ENCODE measurements at regions of chr11 and their contacts with region 1.

Region 1: GRCh38 chr11:47394322-47395222 is 13.8 kb upstream of the SLC39A13 start:
- DNase-seq: peak; percentile 72
- H3K4me3 Mint-ChIP-seq: peak overlapping the region; percentile 37
- H3K27ac Mint-ChIP-seq: peak overlapping the region; percentile 87
- H3K4me1 Mint-ChIP-seq: peaks cover 45% of the 10 kb centered on the region
- H3K27me3 Mint-ChIP-seq: no peaks in the 10 kb centered on the region

Region 2: DNA sequence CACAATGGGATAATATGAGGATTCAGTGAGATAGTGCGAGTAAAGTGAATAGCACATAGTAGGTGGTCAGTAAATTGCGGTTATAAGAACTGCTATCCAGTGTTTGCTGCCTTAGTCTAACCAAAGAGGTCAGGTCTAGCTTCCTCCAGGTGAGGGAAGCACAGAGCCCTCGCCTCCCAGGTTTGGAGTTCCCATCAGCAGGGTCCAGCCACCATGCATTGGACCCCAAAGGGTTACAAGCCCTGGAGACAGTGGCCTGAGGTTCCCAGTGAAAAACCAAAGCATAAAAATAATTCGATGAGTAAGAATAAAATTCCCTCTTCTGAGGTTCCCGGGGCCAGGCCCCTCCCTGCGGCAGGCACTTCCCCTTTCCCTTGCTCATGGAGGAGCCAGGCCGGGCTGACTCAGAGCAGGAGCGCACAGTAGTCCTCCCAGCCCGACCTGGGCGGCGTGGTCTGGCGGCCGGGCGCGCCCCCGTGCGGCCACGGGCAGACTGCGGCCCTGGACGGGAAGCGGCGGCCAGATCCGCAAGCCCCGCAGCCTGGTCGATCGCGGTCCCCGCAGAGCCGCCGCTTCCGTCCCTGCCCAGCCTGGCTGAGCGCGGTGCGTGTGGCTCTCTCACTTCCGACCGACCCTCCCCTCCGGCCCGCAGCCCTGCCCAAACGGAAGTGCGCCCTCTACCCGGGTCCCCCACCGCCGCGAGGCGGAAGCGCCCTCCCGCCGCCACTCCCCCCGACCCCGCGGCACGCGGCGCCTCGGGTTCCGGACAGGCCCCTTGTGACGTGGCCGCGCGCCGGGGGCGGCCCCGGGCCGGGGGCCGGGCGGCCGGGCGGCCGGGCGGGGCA is 13.4 kb after region 1 on chr11 and contains the start of gene SLC39A13:
- CTCF ChIA-PET with region 1: interaction called, 12 read pairs
- POLR2A ChIA-PET with region 1: interaction called, 23 read pairs
- DNase-seq: peak; percentile 94
- H3K4me3 Mint-ChIP-seq: peak within 1 kb of the TSS; percentile 90
- H3K27ac Mint-ChIP-seq: peak within 1 kb of the TSS; percentile 85
- H3K4me1 Mint-ChIP-seq: peaks cover 21% of the 10 kb centered on the region
- H3K27me3 Mint-ChIP-seq: no peaks in the 10 kb centered on the region
- total RNA-seq, gene SLC39A13: 23.6 to 24.2 TPM